GM10248 (cell line): ENCODE measurements at regions of chr10 and their contacts with region 1.

Region 1: GRCh38 chr10:16777473-16778370 is 39.5 kb downstream of the RSU1 start:
- DNase-seq: peak; percentile 68
- CTCF ChIP-seq: peak; percentile 65

Region 2: GRCh38 chr10:16673443-16673842 is 104.3 kb before region 1 on chr10:
- CTCF ChIA-PET with region 1: no interaction called
- POLR2A ChIA-PET with region 1: no interaction called
- DNase-seq: no peak
- CTCF ChIP-seq: no peak

Region 3: DNA sequence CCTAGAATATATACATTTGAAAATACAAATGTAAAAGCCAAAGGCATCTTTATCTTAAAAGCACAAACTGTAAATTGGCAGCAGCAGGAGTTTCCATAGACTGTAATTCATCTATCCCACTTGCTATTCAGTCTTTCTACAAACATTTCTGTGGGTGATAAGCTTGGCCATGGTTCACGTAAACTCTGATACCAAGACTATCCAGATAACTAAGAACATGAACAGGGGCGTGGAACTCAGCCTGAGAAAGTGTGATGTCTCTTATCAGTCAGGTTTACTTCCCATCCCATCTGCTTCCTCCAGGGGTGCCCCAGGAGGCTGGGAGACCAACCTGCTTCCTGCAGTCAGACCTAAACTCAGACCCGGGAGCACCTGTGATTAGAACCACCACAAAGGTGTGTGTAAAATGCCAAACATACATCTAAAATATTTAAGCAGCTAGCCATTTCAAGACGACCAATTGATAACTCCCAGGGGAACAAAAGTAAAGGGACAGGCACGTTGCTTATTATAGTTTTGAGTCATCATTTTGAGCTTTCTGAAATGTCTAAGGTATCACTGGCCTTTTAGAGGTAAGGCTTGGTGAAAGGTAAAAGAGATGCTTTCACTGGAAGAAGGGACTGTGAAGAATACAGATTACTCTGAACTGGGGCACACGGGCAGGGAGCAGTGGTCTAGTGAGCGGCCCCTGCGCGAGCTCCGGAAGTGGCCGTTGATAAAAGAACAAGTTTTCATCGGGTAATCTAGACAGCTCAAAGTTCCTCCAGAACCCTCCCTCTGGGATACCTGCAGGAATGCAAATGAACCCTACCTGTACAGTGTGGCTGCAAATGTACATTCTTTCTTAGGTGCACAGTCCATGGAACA is 12.0 kb before region 1 on chr10:
- CTCF ChIA-PET with region 1: interaction called, 14 read pairs
- POLR2A ChIA-PET with region 1: interaction called, 4 read pairs
- DNase-seq: peak; percentile 20
- CTCF ChIP-seq: no peak